Aorta (tissue), 5 donors: ENCODE measurements at regions of chr2 and their contacts with region 1.

Region 1: GRCh38 chr2:27281855-27282559 is at the start of gene TRIM54:
- DNase-seq: no peak
- ATAC-seq: peak; percentile 26
- H3K4me3 ChIP-seq: no peak within 1 kb of the TSS
- H3K27ac ChIP-seq: no peak within 1 kb of the TSS
- H3K4me1 ChIP-seq: no peaks in the 10 kb centered on the region
- H3K27me3 ChIP-seq: no peaks in the 10 kb centered on the region
- total RNA-seq, gene TRIM54: 0.18 to 0.39 TPM

Region 2: GRCh38 chr2:26968001-26968400 is 314.0 kb before region 1 on chr2:
- intact Hi-C with region 1: loop called (anchors 5 to 10 kb)
- DNase-seq: no peak
- ATAC-seq: no peak
- H3K4me3 ChIP-seq: no peak overlapping the region
- H3K27ac ChIP-seq: no peak overlapping the region
- H3K4me1 ChIP-seq: no peaks in the 10 kb centered on the region
- H3K27me3 ChIP-seq: no peaks in the 10 kb centered on the region

Region 3: DNA sequence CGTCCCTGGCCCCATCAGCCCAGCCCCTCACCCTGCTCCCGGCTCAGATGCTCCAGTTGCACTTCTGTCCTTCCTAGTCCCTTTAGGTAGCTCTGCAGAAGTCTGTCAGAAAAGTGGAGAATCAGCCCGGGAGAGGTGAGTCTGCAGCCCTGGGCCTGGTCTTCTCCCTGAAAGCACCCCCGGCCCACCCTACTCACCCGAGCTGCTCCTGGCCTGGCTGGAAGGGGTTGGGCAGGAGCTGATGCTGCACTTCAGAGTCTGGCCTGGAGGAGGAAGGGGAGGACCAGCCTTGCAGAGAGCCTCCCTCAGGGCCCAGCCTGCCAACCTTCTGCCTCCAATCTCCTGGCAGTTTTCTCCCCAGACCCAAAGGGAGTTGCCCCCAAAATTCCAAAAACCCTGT is 179.7 kb before region 1 on chr2:
- intact Hi-C with region 1: loop called (anchors 2 kb)
- DNase-seq: no peak
- ATAC-seq: no peak
- H3K4me3 ChIP-seq: no peak overlapping the region
- H3K27ac ChIP-seq: no peak overlapping the region
- H3K4me1 ChIP-seq: no peaks in the 10 kb centered on the region
- H3K27me3 ChIP-seq: no peaks in the 10 kb centered on the region

Region 4: DNA sequence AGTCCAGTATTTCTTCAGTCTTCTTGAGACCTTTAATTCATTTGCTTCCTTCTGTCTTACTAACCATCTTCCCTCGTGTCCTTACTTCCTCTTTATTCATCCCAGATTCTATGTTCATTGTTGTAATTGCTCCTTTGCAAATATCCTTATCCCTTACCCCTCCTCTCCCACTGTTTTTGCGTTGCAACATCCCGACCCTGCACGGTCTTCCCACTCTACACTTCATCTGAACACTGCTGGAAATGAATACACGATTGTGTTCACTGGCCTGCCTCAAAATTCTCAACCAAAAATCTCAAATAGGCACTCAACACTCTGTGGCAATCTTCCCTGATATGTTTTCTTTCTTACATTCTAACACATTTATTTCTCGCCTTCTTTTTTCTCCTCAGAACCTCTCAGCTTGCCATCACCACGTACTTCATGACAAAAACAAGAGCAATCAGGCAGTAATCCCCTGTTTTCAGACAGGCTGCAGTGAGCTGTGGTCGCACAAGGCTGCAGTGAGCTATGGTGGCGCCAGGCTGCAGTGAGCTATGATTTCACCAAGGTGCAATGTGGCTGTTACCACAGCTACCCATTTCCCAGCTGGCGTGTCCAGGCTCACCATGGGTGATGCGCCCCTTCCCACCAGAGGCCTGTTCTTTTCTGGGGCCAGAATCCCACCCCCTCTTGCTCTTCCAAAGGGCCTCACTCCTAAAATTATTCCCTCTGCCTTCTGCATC is 107.5 kb before region 1 on chr2:
- intact Hi-C with region 1: loop called in 1 of 2 experiments (anchors 5 kb)
- DNase-seq: no peak
- ATAC-seq: no peak
- H3K4me3 ChIP-seq: no peak overlapping the region
- H3K27ac ChIP-seq: no peak overlapping the region
- H3K4me1 ChIP-seq: no peaks in the 10 kb centered on the region
- H3K27me3 ChIP-seq: no peaks in the 10 kb centered on the region

Region 5: DNA sequence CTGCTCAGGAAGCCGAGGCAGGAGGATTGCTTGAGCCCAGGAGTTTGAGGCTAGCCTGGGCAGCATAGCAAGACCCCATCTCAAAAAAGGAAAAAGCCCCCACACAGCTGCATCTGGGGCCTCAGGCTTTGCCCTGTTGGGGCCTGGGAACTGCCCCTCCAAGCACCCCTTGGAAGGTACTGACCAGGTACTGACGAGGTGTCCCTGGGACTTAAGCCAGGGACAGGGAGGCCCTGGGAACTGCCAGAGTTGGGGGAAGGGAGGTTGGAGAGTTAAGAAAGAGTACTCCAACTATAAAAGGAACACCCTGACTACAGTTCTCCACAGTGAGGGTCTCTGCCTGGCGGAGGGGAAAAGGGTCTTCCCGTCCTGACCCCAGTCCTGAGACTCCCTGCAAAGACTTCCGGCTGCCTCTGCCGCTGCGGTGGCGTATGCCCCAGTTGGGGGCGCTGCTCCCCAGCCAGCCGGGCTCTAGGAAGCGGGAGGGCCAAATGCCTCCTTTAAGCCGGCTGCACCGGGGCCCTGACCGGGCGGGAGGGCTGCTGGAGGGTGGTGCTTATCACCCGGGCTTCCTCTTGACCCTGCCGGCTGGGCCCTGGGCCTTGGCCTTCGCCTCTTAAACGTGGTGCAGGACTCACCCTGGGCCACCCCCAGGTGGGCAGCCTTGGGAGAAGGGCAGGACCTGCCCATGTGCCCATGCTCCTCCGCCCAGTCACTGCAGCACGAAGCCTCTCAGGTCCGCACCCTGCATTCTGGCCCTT is 31.9 kb before region 1 on chr2:
- intact Hi-C with region 1: no loop called
- DNase-seq: peak in 1 of 2 donors; percentile 56
- ATAC-seq: peak; percentile 4
- H3K4me3 ChIP-seq: no peak overlapping the region
- H3K27ac ChIP-seq: no peak overlapping the region
- H3K4me1 ChIP-seq: peaks cover 0 to 3% of the 10 kb centered on the region in 2 donors
- H3K27me3 ChIP-seq: no peaks in the 10 kb centered on the region